ENCODE measurements at regions of chr4 and their contacts with region 1.

Region 1: DNA sequence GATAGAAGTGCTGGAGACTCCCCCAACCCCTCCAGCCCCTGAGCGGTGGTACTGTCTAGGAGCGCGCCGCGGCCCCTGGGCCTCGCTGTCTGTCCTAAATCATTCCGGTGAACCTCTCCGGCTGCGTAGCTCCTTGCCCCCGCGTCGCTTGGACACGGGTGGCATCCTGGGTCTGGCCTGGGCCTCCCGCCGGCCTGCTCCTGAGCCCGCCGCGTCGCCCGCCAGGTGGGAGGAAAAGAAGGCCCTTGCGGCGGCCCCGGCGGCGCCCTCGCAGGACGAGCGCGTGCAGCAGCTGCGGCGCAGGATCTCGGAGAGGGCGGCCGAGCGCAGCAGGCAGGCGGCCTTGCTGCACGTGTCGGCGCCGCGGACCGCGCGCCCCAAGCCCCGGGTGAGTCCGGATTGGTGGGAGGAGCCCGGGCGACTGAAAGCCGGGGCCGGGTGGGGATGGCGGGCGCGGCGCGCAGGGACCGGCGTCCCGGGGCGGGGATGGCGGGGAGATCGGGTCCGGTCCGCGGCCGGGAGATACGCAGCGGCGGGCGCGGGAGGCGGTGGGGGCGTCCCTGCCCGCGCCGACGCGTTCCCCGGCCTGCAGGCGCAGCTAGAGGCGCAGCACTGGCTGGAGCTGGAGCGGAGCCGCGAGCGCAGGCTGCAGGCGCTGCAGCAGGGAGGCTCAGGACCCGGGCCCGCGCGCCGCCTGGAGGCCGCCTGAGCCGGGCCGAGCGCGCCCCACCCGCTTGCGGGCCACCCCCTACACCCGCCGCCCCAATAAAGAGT is 6.5 kb upstream of the RNF4 start:
- DNase-seq: peak in 1 of 2 experiments; percentile 84
- H3K4me3 ChIP-seq: peak overlapping the region; percentile 33
- H3K4me3 Mint-ChIP-seq: peak overlapping the region; percentile 70
- H3K27ac Mint-ChIP-seq: peak overlapping the region; percentile 39
- H3K4me1 ChIP-seq: peaks cover 3% of the 10 kb centered on the region; the same call in 1 of the 2 replicates
- H3K4me1 Mint-ChIP-seq: peaks cover 8% of the 10 kb centered on the region
- H3K27me3 ChIP-seq: no peaks in the 10 kb centered on the region
- H3K27me3 Mint-ChIP-seq: no peaks in the 10 kb centered on the region
- CTCF ChIP-seq: peak; percentile 26 to 54

Region 2: DNA sequence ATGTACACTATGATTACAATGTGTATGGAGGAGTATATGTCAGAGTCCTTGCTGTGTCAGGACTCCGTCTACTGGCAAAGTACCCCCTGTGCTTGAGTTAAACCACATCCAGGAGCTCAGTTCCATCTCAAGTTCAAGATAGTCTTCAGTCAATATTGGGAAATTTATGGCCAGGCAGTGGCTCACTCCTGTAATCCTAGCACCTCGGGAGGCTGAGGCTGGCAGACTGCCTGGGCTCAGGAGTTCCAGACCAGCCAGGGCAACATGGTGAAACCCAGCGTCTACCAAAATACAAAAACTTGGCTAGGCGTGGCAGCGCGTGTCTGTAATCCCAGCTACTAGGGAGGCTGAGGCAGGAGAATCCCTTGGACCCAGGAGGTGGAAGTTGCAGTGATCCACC is 756.0 kb before region 1 on chr4:
- CTCF ChIA-PET with region 1: no interaction called
- POLR2A ChIA-PET with region 1: no interaction called
- intact Hi-C with region 1: no loop called
- DNase-seq: no peak
- H3K4me3 ChIP-seq: no peak overlapping the region
- H3K4me3 Mint-ChIP-seq: no peak overlapping the region
- H3K27ac Mint-ChIP-seq: no peak overlapping the region
- H3K4me1 ChIP-seq: peaks cover 29% of the 10 kb centered on the region
- H3K4me1 Mint-ChIP-seq: peaks cover 34% of the 10 kb centered on the region
- H3K27me3 ChIP-seq: no peaks in the 10 kb centered on the region
- H3K27me3 Mint-ChIP-seq: no peaks in the 10 kb centered on the region
- CTCF ChIP-seq: no peak

Region 3: DNA sequence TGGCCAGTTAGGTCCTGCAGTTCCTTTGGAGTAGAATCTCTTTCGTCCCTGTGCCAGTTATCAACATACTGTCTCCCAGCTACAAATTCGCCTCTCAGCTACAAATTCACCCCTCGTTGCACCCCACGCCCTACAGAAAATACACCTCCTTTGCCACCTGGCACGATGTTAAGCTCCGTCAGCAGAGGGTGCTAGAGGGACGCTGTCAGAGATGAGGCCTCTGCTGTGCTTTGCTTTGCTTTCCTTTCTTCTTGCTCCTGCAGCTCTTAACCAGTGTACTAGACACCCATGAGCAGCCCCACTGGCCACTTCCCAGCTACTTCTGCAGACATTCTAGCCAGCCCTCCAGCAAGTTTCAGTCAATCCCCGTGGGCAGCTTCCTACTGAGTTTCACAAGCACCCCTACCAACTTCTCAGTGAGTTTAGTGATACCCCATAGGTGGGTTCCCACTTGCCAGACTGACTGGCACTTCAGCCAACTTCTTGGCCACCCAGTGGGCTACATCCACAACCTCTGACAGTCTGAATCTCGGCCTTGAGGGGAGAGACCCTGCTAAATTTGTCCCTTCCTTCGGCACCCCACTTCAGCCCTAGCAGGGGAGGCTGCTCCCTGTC is 242.3 kb before region 1 on chr4:
- CTCF ChIA-PET with region 1: interaction called, 14 read pairs
- POLR2A ChIA-PET with region 1: no interaction called
- intact Hi-C with region 1: loop called (anchors 1 kb)
- DNase-seq: peak; percentile 69 to 79
- H3K4me3 ChIP-seq: no peak overlapping the region
- H3K4me3 Mint-ChIP-seq: no peak overlapping the region
- H3K27ac Mint-ChIP-seq: no peak overlapping the region
- H3K4me1 ChIP-seq: no peaks in the 10 kb centered on the region
- H3K4me1 Mint-ChIP-seq: peaks cover 9% of the 10 kb centered on the region
- H3K27me3 ChIP-seq: no peaks in the 10 kb centered on the region
- H3K27me3 Mint-ChIP-seq: no peaks in the 10 kb centered on the region
- CTCF ChIP-seq: peak; percentile 78 to 88

Region 4: DNA sequence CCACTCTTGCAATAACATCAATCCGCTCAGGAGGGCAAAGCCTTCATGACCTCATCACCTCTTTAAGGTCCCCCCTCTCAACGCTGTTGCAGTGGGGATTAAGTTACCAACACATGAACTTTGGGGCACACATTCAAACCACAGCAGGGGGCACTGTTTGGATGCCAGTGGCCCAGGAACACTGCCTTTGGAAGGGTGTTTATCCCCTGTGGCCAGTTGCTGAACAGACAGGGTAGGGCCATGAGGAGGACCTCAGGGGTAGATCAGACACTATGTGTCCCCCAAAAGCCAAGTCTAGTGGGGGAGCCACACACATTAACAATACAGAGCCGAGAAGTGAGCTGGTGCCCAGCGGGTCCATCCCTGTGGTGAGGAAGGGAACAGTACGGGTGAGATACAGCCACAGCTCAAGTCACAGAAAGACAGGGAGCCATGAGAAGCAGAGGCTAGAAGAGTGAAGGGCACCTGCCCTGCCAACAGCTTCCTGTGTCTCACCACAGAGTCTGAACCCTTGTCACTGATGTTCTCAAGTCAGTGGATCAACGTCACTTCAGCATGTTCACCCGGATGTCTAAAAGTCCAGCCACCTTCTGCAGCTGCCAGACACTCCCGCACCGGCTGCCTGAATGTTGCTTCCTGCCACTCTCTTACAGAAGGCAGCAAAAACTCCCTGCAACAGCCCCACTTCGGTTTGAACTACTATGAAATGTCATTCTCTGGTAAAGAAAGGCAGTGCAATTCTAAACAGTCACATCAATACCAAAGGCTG is 180.6 kb before region 1 on chr4:
- CTCF ChIA-PET with region 1: no interaction called
- POLR2A ChIA-PET with region 1: no interaction called
- intact Hi-C with region 1: no loop called
- DNase-seq: no peak
- H3K4me3 ChIP-seq: no peak overlapping the region
- H3K4me3 Mint-ChIP-seq: no peak overlapping the region
- H3K27ac Mint-ChIP-seq: no peak overlapping the region
- H3K4me1 ChIP-seq: no peaks in the 10 kb centered on the region
- H3K4me1 Mint-ChIP-seq: no peaks in the 10 kb centered on the region
- H3K27me3 ChIP-seq: no peaks in the 10 kb centered on the region; the same call in 1 of the 2 replicates
- H3K27me3 Mint-ChIP-seq: peaks cover 5% of the 10 kb centered on the region
- CTCF ChIP-seq: peak in 1 of 2 experiments; percentile 4

Region 5: DNA sequence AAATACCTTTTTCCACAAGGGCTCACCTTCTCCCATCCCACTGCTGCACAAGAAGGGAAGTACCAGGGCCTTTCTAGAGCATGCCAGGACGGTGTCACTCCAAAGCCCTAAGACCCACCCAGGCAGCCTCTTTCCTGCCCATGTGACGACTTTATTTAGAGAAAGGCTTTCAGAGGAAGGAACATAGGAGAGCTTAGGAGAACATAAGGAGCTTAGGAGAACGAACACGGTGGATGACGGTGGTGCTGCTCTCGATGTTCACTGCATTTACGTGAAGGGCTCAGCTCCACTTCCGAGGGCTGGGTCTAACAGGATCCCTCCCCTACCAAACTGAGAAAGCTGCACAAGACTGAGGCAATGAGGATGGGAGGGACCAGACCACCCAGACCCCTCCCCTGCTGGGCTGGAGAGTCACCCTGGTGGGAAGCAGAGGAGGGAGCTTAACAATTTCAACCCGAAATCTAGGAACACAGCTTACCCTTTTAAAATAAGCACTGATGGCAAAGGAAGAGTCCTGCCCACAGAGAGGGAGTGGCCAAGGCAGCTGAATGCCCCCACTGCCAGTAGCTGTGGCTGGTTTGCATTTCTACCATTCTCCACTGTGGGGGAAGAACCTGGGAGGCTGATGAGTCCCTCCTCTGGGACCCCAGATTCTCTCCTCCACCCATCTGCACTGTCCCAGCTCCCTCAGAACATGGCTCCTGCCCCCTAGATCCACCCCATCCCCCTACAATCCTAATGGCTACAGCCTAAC is 73.8 kb before region 1 on chr4:
- CTCF ChIA-PET with region 1: no interaction called
- POLR2A ChIA-PET with region 1: no interaction called
- intact Hi-C with region 1: no loop called
- DNase-seq: no peak
- H3K4me3 ChIP-seq: no peak overlapping the region
- H3K4me3 Mint-ChIP-seq: no peak overlapping the region
- H3K27ac Mint-ChIP-seq: no peak overlapping the region
- H3K4me1 ChIP-seq: no peaks in the 10 kb centered on the region
- H3K4me1 Mint-ChIP-seq: peaks cover 5% of the 10 kb centered on the region
- H3K27me3 ChIP-seq: no peaks in the 10 kb centered on the region
- H3K27me3 Mint-ChIP-seq: peaks cover 3% of the 10 kb centered on the region
- CTCF ChIP-seq: no peak